ENCODE measurements at regions of chr15 and their contacts with region 1.

Region 1: GRCh38 chr15:58987489-58988005 is at the start of gene RNF111:
- DNase-seq: peak; percentile 94 to 97
- H3K4me3 ChIP-seq: peak within 1 kb of the TSS; percentile 85
- H3K4me1 ChIP-seq: peaks cover 14% of the 10 kb centered on the region
- H3K27me3 ChIP-seq: peaks cover 5% of the 10 kb centered on the region; the same call in 1 of the 2 replicates

Region 2: DNA sequence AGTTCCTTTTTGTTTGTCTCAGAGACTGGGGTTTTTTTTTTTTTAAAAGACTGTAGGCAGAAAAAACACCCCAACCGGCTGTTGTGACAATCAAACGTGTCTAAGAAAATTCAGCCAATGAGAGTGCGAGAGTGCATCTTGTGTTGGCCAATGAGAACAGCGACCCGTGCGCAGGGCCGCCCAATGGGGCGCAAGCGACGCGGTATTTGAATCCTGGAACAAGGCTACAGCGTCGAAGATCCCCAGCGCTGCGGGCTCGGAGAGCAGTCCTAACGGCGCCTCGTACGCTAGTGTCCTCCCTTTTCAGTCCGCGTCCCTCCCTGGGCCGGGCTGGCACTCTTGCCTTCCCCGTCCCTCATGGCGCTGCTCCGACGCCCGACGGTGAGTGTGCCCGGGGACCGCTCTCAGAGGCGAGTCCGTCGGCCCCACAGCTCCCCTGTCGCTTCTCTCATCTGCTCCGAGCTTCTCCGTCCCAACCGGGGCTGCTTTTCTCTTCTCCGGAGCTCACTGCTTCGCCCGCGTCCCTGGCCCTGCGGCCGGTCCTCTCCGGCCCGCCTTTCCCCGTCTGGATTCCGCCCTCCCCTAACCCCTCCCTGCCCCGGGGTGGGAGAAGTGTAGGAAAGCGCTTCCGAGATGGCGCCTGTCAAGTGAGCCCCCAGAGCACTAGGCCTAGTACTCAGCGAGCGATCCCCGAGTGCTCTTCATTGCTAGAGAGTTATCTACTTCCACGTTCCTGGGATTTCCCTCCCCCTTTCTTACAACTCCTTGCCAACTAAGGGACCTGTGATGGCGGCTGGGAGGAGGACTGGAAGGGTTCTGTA is 117.6 kb after region 1 on chr15 and contains the start of gene CCNB2:
- in situ Hi-C with region 1: loop called (anchors 10 kb)
- DNase-seq: peak; percentile 91 to 92
- H3K4me3 ChIP-seq: peak within 1 kb of the TSS; percentile 95
- H3K4me1 ChIP-seq: no peaks in the 10 kb centered on the region; the same call in 1 of the 2 replicates
- H3K27me3 ChIP-seq: no peaks in the 10 kb centered on the region

Region 3: DNA sequence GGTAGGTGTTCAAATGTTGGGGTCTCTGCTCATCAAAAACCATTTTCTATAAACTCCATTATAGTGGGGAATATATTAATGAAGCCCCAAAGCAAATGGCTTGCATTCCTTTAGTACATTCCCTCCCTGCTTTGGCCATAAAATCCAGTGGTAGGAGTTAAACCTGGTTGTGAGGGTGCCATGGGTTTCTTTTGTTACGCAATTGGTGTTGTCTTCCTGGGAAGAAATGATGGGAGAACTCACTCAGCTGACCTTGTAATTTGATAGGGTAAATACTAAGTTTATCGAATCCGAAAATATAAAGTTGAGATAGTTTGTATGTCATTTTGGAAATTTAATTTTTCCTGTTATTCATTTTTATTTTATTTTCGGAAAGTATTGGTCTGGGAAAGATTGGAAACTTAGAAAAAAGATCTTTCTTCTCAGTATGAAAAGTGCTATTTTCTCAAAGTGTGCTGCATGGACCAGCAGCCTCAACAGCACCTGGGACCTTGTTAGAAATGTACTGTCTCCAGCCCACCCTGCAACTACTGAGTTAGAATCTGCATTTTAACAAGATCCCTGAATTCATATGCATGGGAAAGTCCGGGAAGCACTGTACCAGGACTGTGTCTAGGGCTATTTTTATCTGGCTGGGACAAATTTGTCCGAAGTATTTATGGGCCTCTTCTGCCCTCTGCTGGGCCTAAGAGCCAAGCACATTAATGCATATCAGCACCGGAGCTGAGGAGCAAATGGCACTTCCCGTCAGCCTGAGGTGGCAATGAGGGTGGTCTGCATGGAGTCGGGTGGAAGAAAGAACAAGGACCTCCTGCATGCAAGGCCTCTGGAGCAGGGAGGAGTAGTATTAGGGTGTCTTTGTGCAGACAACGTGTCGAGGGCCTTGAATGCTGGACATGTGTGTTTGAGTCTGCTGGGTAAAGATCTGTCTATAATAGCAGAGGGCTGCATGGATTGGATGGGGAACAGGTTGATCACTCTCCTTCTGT is 505.1 kb after region 1 on chr15:
- in situ Hi-C with region 1: loop called (anchors 10 kb)
- DNase-seq: peak; percentile 76 to 87
- H3K4me3 ChIP-seq: no peak overlapping the region
- H3K4me1 ChIP-seq: peaks cover 13% of the 10 kb centered on the region
- H3K27me3 ChIP-seq: no peaks in the 10 kb centered on the region

Region 4: GRCh38 chr15:59528965-59529402 is 541.4 kb after region 1 on chr15:
- in situ Hi-C with region 1: loop called (anchors 10 kb)
- DNase-seq: peak; percentile 86 to 94
- H3K4me3 ChIP-seq: no peak overlapping the region
- H3K4me1 ChIP-seq: no peaks in the 10 kb centered on the region
- H3K27me3 ChIP-seq: no peaks in the 10 kb centered on the region